ENCODE measurements at regions of chr5 and their contacts with region 1.

Region 1: GRCh38 chr5:136655429-136655828 is 290.1 kb upstream of the TRPC7 start:
- DNase-seq: no peak

Region 2: GRCh38 chr5:136109453-136110133 is 545.8 kb before region 1 on chr5:
- intact Hi-C with region 1: loop called in 1 of 2 experiments (anchors 5 kb)
- DNase-seq: no peak

Region 3: GRCh38 chr5:136296846-136297245 is 358.6 kb before region 1 on chr5:
- intact Hi-C with region 1: no loop called
- DNase-seq: no peak

Measured in posterior vena cava (tissue), 2 donors.